ENCODE measurements at regions of chr19 and their contacts with region 1.

Region 1: GRCh38 chr19:34974646-34975045 is 10.6 kb upstream of the ZNF792 start:
- DNase-seq: no peak
- ATAC-seq: no peak
- H3K4me3 ChIP-seq: no peak overlapping the region
- H3K27ac ChIP-seq: no peak overlapping the region
- H3K4me1 ChIP-seq: peaks cover 3% of the 10 kb centered on the region
- H3K27me3 ChIP-seq: peaks cover 0 to 1% (median 0%) of the 10 kb centered on the region in 3 donors
- CTCF ChIP-seq: no peak

Region 2: GRCh38 chr19:35013031-35013819 is 38.6 kb after region 1 on chr19:
- intact Hi-C with region 1: loop called (anchors 1 to 2 kb)
- DNase-seq: peak; percentile 75 to 86
- ATAC-seq: peak; percentile 74 to 85 (median 78)
- H3K4me3 ChIP-seq: no peak overlapping the region
- H3K27ac ChIP-seq: no peak overlapping the region
- H3K4me1 ChIP-seq: peaks cover 8% of the 10 kb centered on the region
- H3K27me3 ChIP-seq: no peaks in the 10 kb centered on the region
- CTCF ChIP-seq: peak; percentile 94

Region 3: DNA sequence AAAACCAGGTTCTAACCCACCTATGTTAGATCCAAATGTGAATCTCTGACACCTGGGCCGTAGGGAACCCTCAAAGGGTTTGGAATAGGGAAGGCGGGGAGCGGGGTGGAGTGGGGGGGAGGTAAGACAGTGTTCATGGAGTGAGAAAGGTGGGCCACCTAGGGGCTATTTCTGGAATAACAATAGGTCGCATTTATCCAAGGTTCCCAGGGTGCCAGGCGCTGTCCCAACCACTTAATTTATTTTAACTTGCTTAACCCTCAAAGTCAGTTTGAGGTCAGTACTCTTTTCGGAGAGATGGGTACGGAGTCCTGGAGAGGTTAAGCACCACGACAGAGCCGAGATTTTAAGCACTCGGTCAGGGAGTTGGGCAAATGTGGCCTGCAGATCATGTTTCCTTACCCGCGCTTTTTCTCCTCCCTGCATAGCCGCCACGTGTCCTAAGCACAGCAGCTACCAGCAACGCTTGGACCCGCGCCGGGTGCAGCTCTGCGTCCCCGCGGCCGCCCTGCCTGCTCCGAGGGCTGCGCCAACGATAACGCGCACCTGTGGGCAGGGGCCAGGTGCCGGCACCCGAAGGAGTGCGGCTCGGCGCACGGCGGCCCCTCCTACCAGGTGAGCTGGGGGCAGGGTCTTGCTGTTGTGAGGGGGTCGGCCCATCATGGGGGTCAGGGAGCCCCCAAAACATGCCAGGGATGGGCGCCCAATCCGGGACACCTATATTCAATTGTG is 116.0 kb after region 1 on chr19:
- intact Hi-C with region 1: loop called (anchors 2 kb)
- DNase-seq: peak in 1 of 2 donors; percentile 41
- ATAC-seq: peak; percentile 85 to 95 (median 88)
- H3K4me3 ChIP-seq: peak overlapping the region; percentile 52
- H3K27ac ChIP-seq: peak overlapping the region; percentile 23
- H3K4me1 ChIP-seq: peaks cover 3% of the 10 kb centered on the region
- H3K27me3 ChIP-seq: no peaks in the 10 kb centered on the region
- CTCF ChIP-seq: peak; percentile 68

Region 4: GRCh38 chr19:35140962-35141637 is 166.5 kb after region 1 on chr19:
- intact Hi-C with region 1: loop called in 1 of 2 experiments (anchors 5 kb)
- DNase-seq: peak; percentile 95 to 98
- ATAC-seq: peak; percentile 68 to 86 (median 72)
- H3K4me3 ChIP-seq: peak overlapping the region; percentile 69
- H3K27ac ChIP-seq: peak overlapping the region; percentile 97
- H3K4me1 ChIP-seq: peaks cover 21% of the 10 kb centered on the region
- H3K27me3 ChIP-seq: no peaks in the 10 kb centered on the region
- CTCF ChIP-seq: peak; percentile 35

Measured in psoas muscle (tissue), 8 donors.